Heart right ventricle (tissue), 16 donors: ENCODE measurements at regions of chr22 and their contacts with region 1.

Region 1: DNA sequence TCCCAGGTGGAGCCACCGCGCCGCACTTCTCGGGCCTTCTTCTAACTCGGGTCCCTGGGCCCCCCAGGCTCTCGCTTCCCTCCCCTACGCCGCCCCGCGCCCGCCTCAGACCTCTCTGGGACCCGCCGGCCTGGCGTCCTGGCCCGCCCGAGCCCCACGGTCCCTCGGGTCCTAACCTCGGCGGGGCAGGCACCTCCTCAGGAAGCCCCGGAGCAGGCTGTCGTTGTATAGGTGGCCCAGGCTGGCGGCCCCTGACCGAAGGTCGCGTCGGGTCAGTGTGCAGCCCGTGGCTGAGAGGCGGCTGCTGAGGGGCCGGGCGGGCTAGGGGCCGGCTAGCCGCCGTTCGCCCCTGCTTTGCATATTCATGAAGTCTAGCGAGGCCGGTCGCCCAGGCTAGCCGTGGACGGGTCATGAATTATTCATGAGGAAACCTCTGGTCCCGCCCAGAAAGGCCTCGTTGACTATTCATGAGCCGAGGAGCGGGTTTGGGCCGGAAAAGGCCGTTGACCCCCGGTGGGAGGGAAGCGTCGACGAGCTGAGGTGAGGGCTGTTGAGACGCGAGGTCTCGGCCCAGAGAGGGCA is at the start of gene HORMAD2:
- DNase-seq: peak in 1 of 2 donors; percentile 9
- ATAC-seq: peak in 1 of 8 donors; percentile 56
- H3K4me3 ChIP-seq: peak within 1 kb of the TSS in 7 of 10 donors; percentile 18 to 43 (median 33)
- H3K27ac ChIP-seq: no peak within 1 kb of the TSS
- H3K4me1 ChIP-seq: peaks cover 0 to 7% (median 4%) of the 10 kb centered on the region in 9 donors
- H3K27me3 ChIP-seq: peaks cover 0 to 48% (median 37%) of the 10 kb centered on the region in 7 donors
- CTCF ChIP-seq: no peak
- total RNA-seq, gene HORMAD2: not detected

Region 2: DNA sequence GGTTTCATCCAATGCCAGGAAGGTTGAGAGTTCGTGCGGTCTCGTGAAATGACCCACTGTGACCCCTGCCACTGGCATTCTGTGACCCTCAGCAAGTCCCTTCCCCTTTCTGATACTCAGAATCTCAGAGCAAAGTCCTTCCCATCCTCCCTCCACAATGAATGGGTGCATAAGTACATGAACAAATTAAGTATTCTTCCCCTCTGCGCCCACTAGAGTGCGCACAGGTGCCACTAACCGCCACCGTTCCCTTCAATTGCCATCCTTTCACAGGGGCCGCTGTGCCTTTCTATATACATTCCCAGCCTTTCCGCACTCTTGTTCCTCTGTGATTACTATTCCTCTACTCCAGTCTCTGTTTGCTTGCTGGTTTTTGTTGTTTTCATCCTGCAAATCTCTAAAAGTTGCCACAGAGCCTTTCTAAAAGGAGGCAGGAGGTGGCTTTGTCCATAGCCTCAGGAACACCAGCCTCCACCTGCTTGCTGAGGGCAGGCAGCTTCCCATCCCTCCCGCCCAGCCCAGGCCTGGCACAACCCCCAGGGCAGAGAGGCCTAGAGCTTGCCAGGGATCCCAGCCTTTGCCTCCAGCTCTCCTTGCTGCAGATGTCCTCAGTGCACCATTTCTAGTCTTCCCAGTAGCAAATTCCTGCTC is 685.0 kb before region 1 on chr22:
- intact Hi-C with region 1: loop called in 1 of 10 experiments (anchors 10 kb)
- DNase-seq: peak; percentile 53 to 67
- ATAC-seq: peak; percentile 75 to 93 (median 86)
- H3K4me3 ChIP-seq: no peak overlapping the region
- H3K27ac ChIP-seq: no peak overlapping the region
- H3K4me1 ChIP-seq: peaks cover 0 to 15% (median 4%) of the 10 kb centered on the region in 9 donors
- H3K27me3 ChIP-seq: no peaks in the 10 kb centered on the region
- CTCF ChIP-seq: peak; percentile 56 to 89 (median 81)

Region 3: DNA sequence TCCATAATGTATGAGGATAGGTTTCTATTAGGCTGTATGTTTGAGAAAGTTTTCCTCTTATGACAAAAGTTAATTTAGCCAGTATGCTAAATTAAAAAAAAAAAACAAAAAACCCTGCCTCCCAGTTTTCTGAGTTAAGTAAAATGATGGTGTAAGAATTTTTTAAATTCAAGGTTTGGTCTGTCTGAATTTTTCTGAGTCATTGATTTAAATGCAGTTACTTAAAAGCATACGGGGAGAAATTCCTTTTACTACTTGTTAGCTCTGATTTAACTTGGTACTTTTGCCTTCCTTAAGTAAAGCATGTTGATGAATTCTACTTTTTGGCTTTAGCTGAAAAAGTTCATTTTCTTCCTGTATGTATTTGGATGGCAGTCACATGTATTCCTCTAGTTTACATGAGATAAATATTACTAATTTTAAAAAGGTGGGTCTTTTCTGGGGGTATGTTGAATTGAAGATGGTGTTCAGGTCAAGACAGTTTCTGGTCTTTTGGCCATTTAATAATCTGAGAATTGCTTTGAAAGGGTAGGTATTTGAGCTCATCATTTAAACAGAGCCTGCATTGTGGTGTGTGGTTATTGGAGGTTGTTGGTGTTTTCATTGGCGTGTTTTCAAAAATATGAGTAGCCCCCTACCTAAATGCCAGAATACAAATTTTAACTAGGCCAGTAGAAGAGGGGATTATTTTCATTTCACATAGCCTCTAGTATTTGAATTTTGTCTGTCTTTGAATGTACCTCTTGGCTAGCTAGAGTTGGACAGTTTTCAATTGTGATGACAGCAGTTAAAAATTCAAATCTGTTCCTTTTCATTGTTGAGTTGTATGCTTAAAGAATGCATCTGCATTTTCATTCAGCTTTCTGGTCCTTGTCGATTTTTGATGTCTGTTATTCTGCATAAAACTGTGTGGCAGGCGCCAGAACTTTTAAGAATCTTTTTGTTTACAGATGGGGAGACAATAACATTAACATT is 132.3 kb before region 1 on chr22:
- intact Hi-C with region 1: no loop called
- DNase-seq: no peak
- ATAC-seq: peak in 1 of 8 donors; percentile 19
- H3K4me3 ChIP-seq: no peak overlapping the region
- H3K27ac ChIP-seq: peak overlapping the region in 1 of 10 donors; percentile 64
- H3K4me1 ChIP-seq: peaks cover 0 to 81% (median 71%) of the 10 kb centered on the region in 9 donors
- H3K27me3 ChIP-seq: no peaks in the 10 kb centered on the region
- CTCF ChIP-seq: no peak